Activated CD8-positive, alpha-beta T cell treated with anti-CD3 and anti-CD28 coated beads for 36 hours (primary cell): ENCODE measurements at regions of chr2 and their contacts with region 1.

Region 1: DNA sequence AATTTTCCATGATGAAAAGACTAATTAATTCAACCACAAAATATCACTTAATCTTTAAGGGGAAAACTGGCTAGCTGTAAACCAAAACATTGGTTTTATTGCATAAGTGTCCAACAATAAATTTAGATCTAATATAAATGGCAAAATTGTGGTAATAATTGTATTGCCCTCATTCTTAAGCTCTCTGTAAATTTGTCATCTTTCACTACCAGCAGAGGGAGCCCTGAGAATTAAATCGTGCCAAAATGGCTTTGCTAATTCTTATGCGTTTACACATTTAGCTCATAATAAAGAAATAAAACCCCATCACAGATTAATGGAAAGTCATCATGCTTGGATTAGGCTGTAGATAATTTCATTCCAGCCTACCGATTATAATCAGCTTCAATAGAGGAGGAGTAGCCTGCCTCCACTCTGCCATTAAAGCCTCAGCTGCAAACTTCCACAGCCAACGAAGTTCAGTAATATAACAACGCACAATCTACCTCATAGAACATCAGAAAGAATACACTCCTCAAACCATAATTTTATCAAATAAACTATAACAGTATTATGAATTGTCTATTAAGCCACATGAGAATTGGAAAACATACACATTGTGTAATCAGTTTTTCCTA is 70.0 kb upstream of the ATP5MC3 start:
- DNase-seq: peak; percentile 19
- ATAC-seq: no peak
- H3K4me3 Mint-ChIP-seq: no peak overlapping the region
- H3K27ac Mint-ChIP-seq: no peak overlapping the region
- H3K4me1 Mint-ChIP-seq: peaks cover 6% of the 10 kb centered on the region
- H3K27me3 Mint-ChIP-seq: peaks cover 35% of the 10 kb centered on the region
- CTCF ChIP-seq: peak; percentile 71

Region 2: GRCh38 chr2:175080479-175080878 is 171.1 kb before region 1 on chr2:
- CTCF ChIA-PET with region 1: no interaction called
- POLR2A ChIA-PET with region 1: no interaction called
- intact Hi-C with region 1: no loop called
- DNase-seq: no peak
- ATAC-seq: no peak
- H3K4me3 Mint-ChIP-seq: no peak overlapping the region
- H3K27ac Mint-ChIP-seq: no peak overlapping the region
- H3K4me1 Mint-ChIP-seq: no peaks in the 10 kb centered on the region
- H3K27me3 Mint-ChIP-seq: no peaks in the 10 kb centered on the region
- CTCF ChIP-seq: no peak

Region 3: DNA sequence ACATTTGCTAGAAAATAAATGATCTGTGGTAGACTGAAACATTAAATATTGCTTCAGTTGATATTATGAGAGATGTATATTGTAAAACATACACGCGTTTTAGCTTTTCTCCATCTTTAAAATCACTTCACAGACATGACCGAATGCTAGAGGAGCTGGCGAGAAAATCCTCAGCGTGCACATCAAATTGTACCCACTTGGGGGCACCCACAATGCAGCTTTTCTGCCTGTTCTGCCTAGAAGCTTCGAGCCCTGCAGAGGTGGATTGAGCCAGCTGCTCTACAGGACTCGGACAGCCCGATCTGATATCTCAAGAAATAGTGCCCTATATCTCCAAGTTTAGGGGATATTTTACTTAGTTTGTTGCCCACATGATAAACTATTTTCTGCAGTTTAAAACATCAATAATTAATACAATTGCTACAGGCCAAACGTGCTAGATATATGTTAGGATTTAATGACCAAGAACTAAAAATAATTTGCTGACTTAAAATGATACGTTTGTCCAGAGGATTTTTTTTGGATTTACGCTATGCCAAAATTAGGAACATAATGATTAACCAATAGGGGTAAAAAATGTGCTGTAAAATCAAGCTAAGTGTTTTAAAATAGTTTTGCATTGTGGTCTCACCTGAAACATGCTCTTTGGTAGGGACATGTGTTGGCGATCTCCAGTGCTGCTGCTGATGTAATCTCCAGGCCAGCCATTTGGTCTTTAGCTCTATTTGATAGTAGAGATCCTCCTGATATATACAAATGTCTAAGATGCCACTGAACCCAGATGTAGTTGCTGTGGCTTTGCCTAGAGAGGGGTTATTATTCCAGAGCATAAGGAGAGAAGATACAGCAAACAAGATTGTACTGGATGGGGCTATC is 47.7 kb before region 1 on chr2:
- CTCF ChIA-PET with region 1: interaction called, 33 read pairs
- POLR2A ChIA-PET with region 1: no interaction called
- intact Hi-C with region 1: no loop called
- DNase-seq: peak; percentile 77
- ATAC-seq: peak; percentile 95
- H3K4me3 Mint-ChIP-seq: no peak overlapping the region
- H3K27ac Mint-ChIP-seq: no peak overlapping the region
- H3K4me1 Mint-ChIP-seq: peaks cover 4% of the 10 kb centered on the region
- H3K27me3 Mint-ChIP-seq: peaks cover 16% of the 10 kb centered on the region
- CTCF ChIP-seq: peak; percentile 63

Region 4: GRCh38 chr2:175233135-175233719 is 18.3 kb before region 1 on chr2:
- CTCF ChIA-PET with region 1: interaction called, 10 read pairs
- POLR2A ChIA-PET with region 1: no interaction called
- intact Hi-C with region 1: no loop called
- DNase-seq: no peak
- ATAC-seq: no peak
- H3K4me3 Mint-ChIP-seq: no peak overlapping the region
- H3K27ac Mint-ChIP-seq: no peak overlapping the region
- H3K4me1 Mint-ChIP-seq: peaks cover 9% of the 10 kb centered on the region
- H3K27me3 Mint-ChIP-seq: peaks cover 20% of the 10 kb centered on the region
- CTCF ChIP-seq: no peak

Region 5: GRCh38 chr2:175282290-175282689 is 30.8 kb after region 1 on chr2:
- CTCF ChIA-PET with region 1: interaction called, 44 read pairs
- POLR2A ChIA-PET with region 1: interaction called, 3 read pairs
- intact Hi-C with region 1: no loop called
- DNase-seq: no peak
- ATAC-seq: peak; percentile 99
- H3K4me3 Mint-ChIP-seq: no peak overlapping the region
- H3K27ac Mint-ChIP-seq: no peak overlapping the region
- H3K4me1 Mint-ChIP-seq: peaks cover 3% of the 10 kb centered on the region
- H3K27me3 Mint-ChIP-seq: peaks cover 3% of the 10 kb centered on the region
- CTCF ChIP-seq: peak; percentile 61

Region 6: DNA sequence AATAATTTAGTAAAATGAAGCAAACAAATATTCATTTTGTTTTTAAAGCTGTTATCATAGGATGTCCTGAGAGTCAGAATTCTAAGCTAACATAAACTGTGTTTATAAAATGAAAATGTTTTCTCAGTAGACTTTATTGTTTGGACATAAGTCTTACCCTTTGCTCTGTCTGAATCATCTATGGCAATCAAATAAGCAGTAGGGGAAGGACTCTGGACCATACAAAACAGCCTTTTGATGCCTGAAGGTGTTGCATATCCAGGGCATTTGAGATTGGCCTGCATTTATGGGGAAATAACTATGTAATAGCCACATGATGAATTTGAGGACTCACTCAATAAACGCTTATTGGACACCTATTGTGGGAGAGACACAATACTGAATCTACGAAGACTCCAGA is 53.0 kb after region 1 on chr2:
- CTCF ChIA-PET with region 1: interaction called, 10 read pairs
- POLR2A ChIA-PET with region 1: no interaction called
- intact Hi-C with region 1: no loop called
- DNase-seq: no peak
- ATAC-seq: no peak
- H3K4me3 Mint-ChIP-seq: no peak overlapping the region
- H3K27ac Mint-ChIP-seq: no peak overlapping the region
- H3K4me1 Mint-ChIP-seq: no peaks in the 10 kb centered on the region
- H3K27me3 Mint-ChIP-seq: peaks cover 15% of the 10 kb centered on the region
- CTCF ChIP-seq: no peak

Region 7: DNA sequence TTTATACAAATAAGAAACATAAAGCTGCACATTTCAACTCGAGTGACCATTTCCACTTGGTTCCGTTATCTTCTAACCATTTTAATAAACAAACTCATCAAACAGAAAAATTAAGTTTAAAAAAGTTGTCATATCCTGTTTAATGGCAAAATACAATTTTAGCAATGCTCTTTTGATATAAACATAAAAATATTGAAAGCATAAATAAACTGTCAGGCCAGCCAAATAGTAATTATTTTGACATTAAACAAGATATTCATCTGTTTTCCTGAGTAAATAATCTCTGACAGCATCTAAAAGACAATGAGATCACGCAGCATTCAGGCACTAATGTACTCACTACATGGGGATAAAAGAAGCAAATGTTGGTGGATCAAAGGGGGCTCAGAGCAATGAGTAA is 75.3 kb after region 1 on chr2:
- CTCF ChIA-PET with region 1: interaction called, 27 read pairs
- POLR2A ChIA-PET with region 1: no interaction called
- intact Hi-C with region 1: no loop called
- DNase-seq: no peak
- ATAC-seq: no peak
- H3K4me3 Mint-ChIP-seq: no peak overlapping the region
- H3K27ac Mint-ChIP-seq: no peak overlapping the region
- H3K4me1 Mint-ChIP-seq: no peaks in the 10 kb centered on the region
- H3K27me3 Mint-ChIP-seq: peaks cover 4% of the 10 kb centered on the region
- CTCF ChIP-seq: no peak

Region 8: GRCh38 chr2:175750195-175750594 is 498.7 kb after region 1 on chr2:
- CTCF ChIA-PET with region 1: no interaction called
- POLR2A ChIA-PET with region 1: no interaction called
- intact Hi-C with region 1: no loop called
- DNase-seq: no peak
- ATAC-seq: no peak
- H3K4me3 Mint-ChIP-seq: no peak overlapping the region
- H3K27ac Mint-ChIP-seq: no peak overlapping the region
- H3K4me1 Mint-ChIP-seq: no peaks in the 10 kb centered on the region
- H3K27me3 Mint-ChIP-seq: peaks cover 13% of the 10 kb centered on the region
- CTCF ChIP-seq: no peak

Region 9: DNA sequence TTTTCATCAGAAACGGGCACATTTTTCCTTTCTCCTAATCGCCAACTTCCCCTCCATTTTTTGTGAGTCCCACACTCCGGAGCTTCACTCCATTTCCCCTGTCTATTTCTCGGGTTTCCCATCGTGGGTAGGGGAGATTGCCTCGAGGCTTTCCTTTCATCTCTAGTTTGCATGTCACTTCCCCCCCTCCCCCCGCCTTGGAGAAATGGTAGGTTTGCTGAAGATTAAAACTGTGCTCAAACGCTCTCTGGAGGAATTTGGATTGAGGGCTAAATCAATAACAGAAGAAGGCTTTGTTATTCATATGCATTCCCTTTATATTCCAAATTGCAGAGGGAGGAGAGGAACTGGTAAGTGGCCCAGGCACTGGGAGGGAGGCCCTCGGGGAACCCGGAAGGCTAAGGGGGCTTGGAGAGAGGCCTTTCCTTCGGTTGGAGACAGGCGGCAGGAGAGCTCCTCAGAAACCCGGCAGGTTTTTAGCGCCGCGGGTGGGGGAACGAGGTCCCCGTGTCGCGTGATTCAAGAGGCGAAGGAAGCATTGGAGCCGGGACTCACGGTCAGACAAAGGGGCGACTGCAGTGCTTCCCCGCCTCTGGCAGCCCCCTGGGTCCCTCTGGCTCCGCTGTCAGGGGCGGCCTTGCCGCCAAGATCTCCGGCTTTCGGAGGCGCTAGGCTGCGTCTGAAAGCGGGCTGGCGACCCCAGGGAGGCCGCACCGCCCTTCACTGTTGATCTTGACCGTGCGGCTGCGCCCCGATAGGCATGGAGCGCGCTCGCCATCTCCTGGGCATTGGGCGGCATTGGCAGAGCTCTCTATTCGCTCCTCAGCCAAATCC is 845.7 kb after region 1 on chr2:
- CTCF ChIA-PET with region 1: interaction called, 11 read pairs
- POLR2A ChIA-PET with region 1: no interaction called
- intact Hi-C with region 1: no loop called
- DNase-seq: peak; percentile 74
- ATAC-seq: peak; percentile 84
- H3K4me3 Mint-ChIP-seq: peak overlapping the region; percentile 35
- H3K27ac Mint-ChIP-seq: no peak overlapping the region
- H3K4me1 Mint-ChIP-seq: peaks cover 14% of the 10 kb centered on the region
- H3K27me3 Mint-ChIP-seq: peaks cover 82% of the 10 kb centered on the region
- CTCF ChIP-seq: peak; percentile 85